Activated CD4-positive, alpha-beta T cell treated with anti-CD3 and anti-CD28 coated beads for 36 hours (primary cell): ENCODE measurements at regions of chr16 and their contacts with region 1.

Region 1: DNA sequence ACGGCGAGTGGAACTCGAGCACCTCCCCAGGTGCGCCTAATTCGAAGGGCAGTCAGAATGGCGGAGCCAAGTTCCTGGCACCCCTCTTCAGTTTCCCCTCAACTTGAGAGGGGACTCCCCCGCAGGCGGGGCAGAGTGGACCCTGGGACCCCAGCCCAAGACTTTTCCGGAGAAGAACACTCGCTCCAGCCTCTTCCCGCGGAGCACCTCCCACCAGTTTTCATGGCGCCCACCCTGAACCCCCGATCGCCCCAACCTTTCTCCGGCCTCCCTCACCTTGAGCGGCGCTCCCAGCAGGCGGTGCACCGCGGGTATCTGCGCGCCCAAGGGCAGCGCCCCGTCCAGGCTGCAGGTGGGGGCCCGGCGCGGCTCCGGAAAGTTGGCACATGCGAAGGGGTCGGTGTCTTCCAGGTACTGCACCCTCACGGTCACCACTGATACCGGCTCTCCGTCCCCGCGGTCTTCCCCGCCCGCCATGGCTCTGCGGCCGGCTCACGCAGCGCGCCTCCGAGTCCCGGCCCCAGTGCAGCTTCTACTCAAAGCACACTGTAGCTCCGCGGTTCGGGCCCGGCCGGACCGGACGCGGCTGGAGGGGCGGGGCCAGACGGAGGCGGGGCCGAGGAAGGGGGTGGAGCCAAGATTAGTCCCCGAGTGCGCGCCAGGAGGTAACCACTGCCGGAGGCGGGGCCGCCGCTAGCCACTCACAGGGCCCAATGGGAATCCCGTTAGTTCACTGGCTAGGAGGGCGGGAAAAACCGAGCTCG is at the start of gene FHOD1:
- DNase-seq: peak; percentile 99
- ATAC-seq: peak; percentile 74
- H3K4me3 Mint-ChIP-seq: peak within 1 kb of the TSS; percentile 87
- H3K27ac Mint-ChIP-seq: peak within 1 kb of the TSS; percentile 85
- H3K4me1 Mint-ChIP-seq: peaks cover 52% of the 10 kb centered on the region
- H3K27me3 Mint-ChIP-seq: peaks cover 11% of the 10 kb centered on the region
- total RNA-seq, gene FHOD1: 75.5 to 77.2 TPM

Region 2: GRCh38 chr16:66894948-66895688 is 352.0 kb before region 1 on chr16:
- CTCF ChIA-PET with region 1: no interaction called
- POLR2A ChIA-PET with region 1: no interaction called
- intact Hi-C with region 1: no loop called
- DNase-seq: peak; percentile 81
- ATAC-seq: peak; percentile 89
- H3K4me3 Mint-ChIP-seq: no peak overlapping the region
- H3K27ac Mint-ChIP-seq: no peak overlapping the region
- H3K4me1 Mint-ChIP-seq: peaks cover 8% of the 10 kb centered on the region
- H3K27me3 Mint-ChIP-seq: no peaks in the 10 kb centered on the region

Region 3: GRCh38 chr16:67109407-67110135 is 137.5 kb before region 1 on chr16 and contains the start of gene PHAF1:
- CTCF ChIA-PET with region 1: no interaction called
- POLR2A ChIA-PET with region 1: interaction called, 4 read pairs
- intact Hi-C with region 1: loop called in 1 of 2 experiments (anchors 2 kb)
- DNase-seq: peak; percentile 98
- ATAC-seq: peak; percentile 94
- H3K4me3 Mint-ChIP-seq: peak within 1 kb of the TSS; percentile 94
- H3K27ac Mint-ChIP-seq: peak within 1 kb of the TSS; percentile 85
- H3K4me1 Mint-ChIP-seq: peaks cover 24% of the 10 kb centered on the region
- H3K27me3 Mint-ChIP-seq: no peaks in the 10 kb centered on the region
- total RNA-seq, gene PHAF1: 12.7 to 14.0 TPM

Region 4: DNA sequence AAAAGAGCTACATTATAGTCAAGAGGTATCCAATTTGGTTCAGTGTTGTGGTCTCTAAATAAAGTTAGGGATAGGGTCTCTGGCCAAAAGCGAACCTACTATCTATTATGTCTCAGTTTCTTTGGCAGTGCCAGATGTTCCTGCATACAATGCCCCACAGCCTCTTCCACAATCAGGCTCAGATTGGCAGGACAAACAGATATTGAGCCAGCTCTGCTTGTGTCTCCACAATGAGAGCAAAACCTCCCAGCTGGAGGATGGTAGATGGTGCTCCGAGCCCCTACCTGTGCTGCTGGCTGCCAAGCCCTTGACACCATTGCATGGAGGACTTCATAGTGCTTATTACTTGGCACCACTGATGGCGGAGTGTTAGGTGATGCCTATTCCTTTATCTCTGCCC is 117.7 kb before region 1 on chr16:
- CTCF ChIA-PET with region 1: no interaction called
- POLR2A ChIA-PET with region 1: no interaction called
- intact Hi-C with region 1: no loop called
- DNase-seq: no peak
- ATAC-seq: no peak
- H3K4me3 Mint-ChIP-seq: no peak overlapping the region
- H3K27ac Mint-ChIP-seq: no peak overlapping the region
- H3K4me1 Mint-ChIP-seq: no peaks in the 10 kb centered on the region
- H3K27me3 Mint-ChIP-seq: no peaks in the 10 kb centered on the region

Region 5: GRCh38 chr16:67191995-67192681 is 55.0 kb before region 1 on chr16 and contains the start of gene E2F4:
- CTCF ChIA-PET with region 1: no interaction called
- POLR2A ChIA-PET with region 1: no interaction called
- intact Hi-C with region 1: loop called in 1 of 2 experiments (anchors 1 kb)
- DNase-seq: peak; percentile 92
- ATAC-seq: peak; percentile 96
- H3K4me3 Mint-ChIP-seq: peak within 1 kb of the TSS; percentile 93
- H3K27ac Mint-ChIP-seq: peak within 1 kb of the TSS; percentile 93
- H3K4me1 Mint-ChIP-seq: peaks cover 32% of the 10 kb centered on the region
- H3K27me3 Mint-ChIP-seq: no peaks in the 10 kb centered on the region
- total RNA-seq, gene E2F4: 91.4 to 110 TPM

Region 6: GRCh38 chr16:67279296-67280089 is 32.4 kb after region 1 on chr16 and contains the start of gene PLEKHG4:
- CTCF ChIA-PET with region 1: interaction called, 4 read pairs
- POLR2A ChIA-PET with region 1: no interaction called
- intact Hi-C with region 1: loop called (anchors 1 kb)
- DNase-seq: peak; percentile 92
- ATAC-seq: peak; percentile 93
- H3K4me3 Mint-ChIP-seq: peak within 1 kb of the TSS; percentile 85
- H3K27ac Mint-ChIP-seq: peak within 1 kb of the TSS; percentile 90
- H3K4me1 Mint-ChIP-seq: peaks cover 19% of the 10 kb centered on the region
- H3K27me3 Mint-ChIP-seq: no peaks in the 10 kb centered on the region
- total RNA-seq, gene PLEKHG4: 21.1 to 23.1 TPM